H1 (cell line): ENCODE measurements at regions of chr11 and their contacts with region 1.

Region 1: DNA sequence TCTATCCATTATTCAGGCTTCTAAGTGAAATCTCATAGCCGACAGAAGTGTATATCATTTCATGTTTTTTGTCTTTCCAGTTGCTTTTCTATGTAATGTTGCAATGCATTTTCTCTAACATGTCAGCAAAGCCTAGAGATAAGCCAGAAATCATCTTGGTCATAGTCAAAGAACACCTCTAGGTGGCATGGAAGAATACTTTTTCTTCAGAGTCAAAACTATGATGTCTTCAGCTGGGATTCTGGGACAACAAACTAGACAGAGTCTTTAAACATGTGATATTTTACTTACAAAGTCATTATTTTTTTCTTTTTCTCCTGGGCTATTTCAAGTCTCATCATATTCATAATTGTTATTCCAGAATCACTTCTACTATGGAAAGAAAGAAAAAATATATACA is 4.4 kb downstream of the GAS2 start:
- DNase-seq: no peak
- H3K4me3 ChIP-seq: no peak overlapping the region
- H3K27ac ChIP-seq: no peak overlapping the region
- H3K4me1 ChIP-seq: peaks cover 2 to 9% (median 4%) of the 10 kb centered on the region in 4 experiments; a peak in 4 of 7 replicates
- H3K27me3 ChIP-seq: peaks cover 0 to 7% (median 2%) of the 10 kb centered on the region in 4 experiments; a peak in 3 of 7 replicates
- CTCF ChIP-seq: peak in 2 of 3 experiments; percentile 13 to 41; a peak in 2 of 4 replicates
- EP300 ChIP-seq: no peak
- POLR2A ChIP-seq: no peak
- RAD21 ChIP-seq: peak; percentile 51

Region 2: DNA sequence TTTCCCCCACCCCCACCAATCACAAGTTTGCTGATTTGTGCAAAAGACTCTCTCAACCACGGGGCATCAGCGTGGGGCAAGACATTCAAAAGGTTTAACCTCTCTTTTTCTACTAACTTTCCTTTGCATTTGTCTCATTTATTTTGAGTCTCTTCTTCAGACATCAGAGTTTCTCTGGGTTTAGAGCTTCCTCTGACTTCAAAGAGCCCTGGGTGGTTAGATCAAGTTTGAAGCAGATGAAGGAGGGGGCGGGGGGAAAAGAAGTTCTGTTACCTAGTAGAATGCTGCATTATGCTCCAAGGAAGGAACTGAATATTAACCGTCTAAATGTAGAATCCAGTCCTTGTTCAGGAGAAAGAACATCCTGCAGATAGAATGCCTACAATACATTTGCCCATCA is 20.0 kb after region 1 on chr11:
- CTCF ChIA-PET with region 1: interaction called, 10 read pairs
- POLR2A ChIA-PET with region 1: no interaction called
- DNase-seq: no peak
- H3K4me3 ChIP-seq: no peak overlapping the region
- H3K27ac ChIP-seq: no peak overlapping the region
- H3K4me1 ChIP-seq: no peaks in the 10 kb centered on the region
- H3K27me3 ChIP-seq: no peaks in the 10 kb centered on the region
- CTCF ChIP-seq: no peak
- EP300 ChIP-seq: no peak
- POLR2A ChIP-seq: no peak
- RAD21 ChIP-seq: no peak

Region 3: GRCh38 chr11:22749536-22749935 is 78.7 kb after region 1 on chr11:
- CTCF ChIA-PET with region 1: no interaction called
- POLR2A ChIA-PET with region 1: no interaction called
- DNase-seq: no peak
- H3K4me3 ChIP-seq: no peak overlapping the region
- H3K27ac ChIP-seq: no peak overlapping the region
- H3K4me1 ChIP-seq: no peaks in the 10 kb centered on the region
- H3K27me3 ChIP-seq: no peaks in the 10 kb centered on the region
- CTCF ChIP-seq: no peak
- EP300 ChIP-seq: no peak
- POLR2A ChIP-seq: no peak
- RAD21 ChIP-seq: no peak

Region 4: GRCh38 chr11:22787551-22788162 is 116.8 kb after region 1 on chr11:
- CTCF ChIA-PET with region 1: interaction called, 13 read pairs
- POLR2A ChIA-PET with region 1: no interaction called
- DNase-seq: no peak
- H3K4me3 ChIP-seq: no peak overlapping the region
- H3K27ac ChIP-seq: no peak overlapping the region
- H3K4me1 ChIP-seq: no peaks in the 10 kb centered on the region
- H3K27me3 ChIP-seq: no peaks in the 10 kb centered on the region
- CTCF ChIP-seq: peak in 2 of 3 experiments; percentile 54 to 61; a peak in 3 of 4 replicates
- EP300 ChIP-seq: no peak
- POLR2A ChIP-seq: no peak
- RAD21 ChIP-seq: peak; percentile 81 to 85